Astrocyte of the cerebellum (primary cell): ENCODE measurements at regions of chr11 and their contacts with region 1.

Region 1: GRCh38 chr11:83819933-83820549 is 533.9 kb upstream of the CCDC90B start:
- DNase-seq: peak; percentile 78
- H3K4me3 ChIP-seq: no peak overlapping the region
- CTCF ChIP-seq: peak; percentile 41

Region 2: GRCh38 chr11:82718307-82718706 is 1101.7 kb before region 1 on chr11:
- in situ Hi-C with region 1: loop called (anchors 25 kb)
- DNase-seq: peak; percentile 34
- H3K4me3 ChIP-seq: no peak overlapping the region
- CTCF ChIP-seq: peak; percentile 84

Region 3: DNA sequence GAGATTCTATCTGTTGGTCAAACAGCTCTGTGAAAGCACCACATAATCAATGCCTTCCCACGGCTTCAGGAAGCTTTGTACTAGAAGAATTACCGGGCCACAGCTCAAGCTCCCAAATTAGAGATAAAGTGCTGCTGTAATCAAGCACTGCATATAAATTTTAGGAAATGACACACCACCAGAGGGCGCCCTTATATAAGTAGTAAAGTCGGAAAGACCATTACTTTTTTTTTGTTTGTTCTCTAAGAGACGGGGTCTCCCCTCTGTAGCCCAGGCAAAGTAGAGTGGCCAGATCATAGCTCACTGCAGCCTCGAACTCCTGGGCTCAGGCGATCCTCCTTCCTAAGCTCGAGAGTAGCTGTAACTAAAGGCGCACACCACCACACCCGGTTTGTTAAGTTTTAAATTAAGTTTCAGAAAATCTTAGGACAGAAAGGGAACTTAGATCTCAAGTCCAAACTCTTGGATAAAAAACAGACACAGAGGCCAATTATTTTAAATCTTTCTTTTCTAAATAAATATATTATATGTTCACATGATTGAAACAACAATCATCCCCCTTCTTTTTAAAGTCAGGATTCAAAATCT is 952.5 kb before region 1 on chr11:
- in situ Hi-C with region 1: loop called (anchors 25 kb)
- DNase-seq: peak; percentile 72
- H3K4me3 ChIP-seq: no peak overlapping the region
- CTCF ChIP-seq: peak; percentile 55

Region 4: GRCh38 chr11:83881445-83881844 is 61.4 kb after region 1 on chr11:
- in situ Hi-C with region 1: no loop called
- DNase-seq: no peak
- H3K4me3 ChIP-seq: no peak overlapping the region
- CTCF ChIP-seq: no peak